ENCODE measurements at regions of chr2 and their contacts with region 1.

Region 1: DNA sequence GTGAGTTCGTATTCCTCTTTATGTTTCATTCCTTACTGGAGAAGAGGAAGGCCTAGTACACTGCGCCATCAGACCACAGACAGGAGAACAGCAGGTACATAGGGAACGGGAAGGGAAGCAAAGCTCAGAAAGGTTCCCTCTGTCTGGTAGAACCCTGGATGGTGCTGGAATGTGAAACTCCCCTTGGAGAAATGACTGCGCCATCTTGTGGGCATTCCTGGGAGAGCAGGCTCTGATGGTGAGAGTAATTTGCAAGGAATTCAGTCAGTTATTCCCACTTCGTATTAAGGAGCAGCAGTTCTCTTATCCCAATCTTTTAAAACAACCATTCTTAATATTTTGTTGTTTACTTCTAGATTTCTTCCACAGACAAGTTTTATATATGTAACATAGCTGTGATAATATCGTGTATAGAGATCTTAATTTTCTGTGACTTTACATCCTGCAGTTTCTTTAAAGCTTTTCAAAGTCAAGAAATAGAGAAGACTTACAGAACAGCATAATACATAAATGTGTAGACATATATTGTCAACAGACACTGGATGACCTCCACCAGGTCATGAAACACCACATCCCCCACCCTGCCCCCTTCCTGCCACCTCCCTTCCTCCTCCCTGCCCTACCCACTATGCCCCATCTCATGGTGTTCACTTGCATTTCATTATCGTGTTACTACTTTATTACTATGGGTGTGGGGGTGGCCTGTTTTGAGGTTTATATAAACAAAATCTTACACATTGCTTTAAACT is 83.9 kb downstream of the ARHGEF4 start:
- DNase-seq: peak; percentile 37
- ATAC-seq: no peak
- H3K4me3 Mint-ChIP-seq: no peak overlapping the region
- H3K27ac Mint-ChIP-seq: no peak overlapping the region
- H3K4me1 Mint-ChIP-seq: no peaks in the 10 kb centered on the region
- H3K27me3 Mint-ChIP-seq: peaks cover 12% of the 10 kb centered on the region
- CTCF ChIP-seq: peak; percentile 49

Region 2: DNA sequence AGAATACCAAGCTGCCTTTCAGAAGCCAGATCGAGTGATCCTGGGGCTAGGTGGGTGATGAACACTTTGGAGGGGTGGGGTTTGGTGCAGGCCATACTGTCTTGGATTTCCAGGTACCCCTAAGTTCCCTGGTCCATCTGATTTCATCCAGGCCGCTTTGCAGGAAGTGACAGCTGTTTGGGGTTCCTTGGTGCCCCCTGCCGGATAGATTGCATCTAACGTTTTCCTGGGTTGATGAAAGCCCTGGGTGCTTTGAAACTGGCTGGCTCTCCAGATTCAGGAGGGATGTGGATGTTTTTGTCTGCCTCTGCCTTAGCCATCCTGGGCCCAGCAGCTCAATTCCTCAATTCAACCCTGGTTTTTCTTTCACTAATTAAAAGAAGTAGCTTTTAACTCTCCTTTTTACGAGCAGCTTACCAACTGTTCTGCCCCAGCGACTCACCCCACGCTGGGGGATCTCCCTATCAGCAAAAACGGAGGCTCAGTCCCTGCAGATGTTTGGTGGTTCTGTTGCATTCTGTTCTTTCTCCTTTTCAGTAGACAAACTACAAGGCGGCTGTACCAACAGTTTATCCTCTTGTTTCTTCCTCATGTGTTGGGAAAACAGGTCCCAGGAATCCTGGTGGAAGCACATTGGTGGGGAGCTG is 46.8 kb before region 1 on chr2:
- CTCF ChIA-PET with region 1: interaction called, 4 read pairs
- POLR2A ChIA-PET with region 1: no interaction called
- intact Hi-C with region 1: loop called (anchors 1 kb)
- DNase-seq: peak; percentile 43
- ATAC-seq: peak; percentile 86
- H3K4me3 Mint-ChIP-seq: peak overlapping the region; percentile 21
- H3K27ac Mint-ChIP-seq: no peak overlapping the region
- H3K4me1 Mint-ChIP-seq: peaks cover 6% of the 10 kb centered on the region
- H3K27me3 Mint-ChIP-seq: peaks cover 4% of the 10 kb centered on the region
- CTCF ChIP-seq: no peak

Region 3: GRCh38 chr2:130890941-130891669 is 29.5 kb before region 1 on chr2:
- CTCF ChIA-PET with region 1: no interaction called
- POLR2A ChIA-PET with region 1: no interaction called
- intact Hi-C with region 1: no loop called
- DNase-seq: no peak
- ATAC-seq: no peak
- H3K4me3 Mint-ChIP-seq: no peak overlapping the region
- H3K27ac Mint-ChIP-seq: no peak overlapping the region
- H3K4me1 Mint-ChIP-seq: peaks cover 4% of the 10 kb centered on the region
- H3K27me3 Mint-ChIP-seq: peaks cover 17% of the 10 kb centered on the region
- CTCF ChIP-seq: no peak

Measured in activated B cell treated with CpG ODN at 0.5 μM for 24 hours (primary cell).